ENCODE measurements at regions of chr3 and their contacts with region 1.

Region 1: GRCh38 chr3:170368921-170369320 is 11.4 kb downstream of the SKIL start:
- DNase-seq: no peak
- H3K4me3 ChIP-seq: no peak overlapping the region
- H3K27ac ChIP-seq: no peak overlapping the region
- H3K4me1 ChIP-seq: peaks cover 44% of the 10 kb centered on the region
- H3K27me3 ChIP-seq: no peaks in the 10 kb centered on the region
- CTCF ChIP-seq: peak; percentile 13 to 16
- POLR2A ChIP-seq: no peak

Region 2: DNA sequence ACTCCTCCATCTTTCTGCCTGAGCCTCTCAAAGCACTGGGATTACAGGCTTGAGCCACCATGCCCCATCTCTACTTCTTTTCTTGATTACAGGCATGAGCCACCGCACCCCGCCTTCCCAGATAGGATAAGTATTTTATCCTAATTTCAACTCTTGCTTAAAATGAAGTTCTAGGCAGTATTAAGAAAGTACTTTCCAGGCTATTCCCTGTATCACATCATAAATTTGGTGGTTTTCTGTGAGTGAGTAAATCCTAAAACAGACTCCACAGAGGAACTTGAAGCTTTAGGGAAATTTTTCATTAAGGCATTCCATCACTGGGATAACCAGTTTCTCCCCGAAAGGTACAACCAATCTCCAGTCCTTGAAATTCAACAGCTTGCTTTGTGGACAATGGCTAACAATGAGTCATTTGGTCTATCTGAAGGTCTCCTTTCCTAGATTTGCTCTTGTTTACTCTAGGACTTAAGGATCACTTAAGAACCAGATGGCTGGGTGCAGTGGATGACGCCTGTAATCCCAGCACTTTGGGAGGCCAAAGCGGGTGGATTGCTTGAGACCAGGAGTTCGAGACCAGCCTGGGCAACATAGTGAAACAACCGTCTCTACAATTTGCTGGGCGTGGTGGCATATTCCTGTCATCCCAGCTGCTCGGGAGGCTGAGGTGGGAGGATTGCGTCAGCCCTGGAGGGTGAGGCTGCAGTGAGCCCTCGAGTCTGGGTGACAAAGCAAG is 61.1 kb before region 1 on chr3:
- CTCF ChIA-PET with region 1: interaction called, 21 read pairs
- POLR2A ChIA-PET with region 1: no interaction called
- dilution Hi-C with region 1: no loop called
- intact Hi-C with region 1: loop called (anchors 1 kb)
- DNase-seq: no peak
- H3K4me3 ChIP-seq: no peak overlapping the region
- H3K27ac ChIP-seq: no peak overlapping the region
- H3K4me1 ChIP-seq: peaks cover 7% of the 10 kb centered on the region
- H3K27me3 ChIP-seq: no peaks in the 10 kb centered on the region
- CTCF ChIP-seq: no peak
- POLR2A ChIP-seq: no peak

Measured in endothelial cell of umbilical vein (primary cell).